Prostate gland (tissue), 2 donors: ENCODE measurements at regions of chr10 and their contacts with region 1.

Region 1: GRCh38 chr10:104580774-104581675 is 60.1 kb upstream of the SORCS3 start:
- DNase-seq: peak; percentile 65
- H3K4me3 ChIP-seq: no peak overlapping the region
- H3K27ac ChIP-seq: no peak overlapping the region
- H3K4me1 ChIP-seq: no peaks in the 10 kb centered on the region
- H3K27me3 ChIP-seq: no peaks in the 10 kb centered on the region
- CTCF ChIP-seq: peak; percentile 53 to 78 (median 62)
- POLR2A ChIP-seq: no peak

Region 2: GRCh38 chr10:104417637-104418296 is 163.3 kb before region 1 on chr10:
- intact Hi-C with region 1: loop called (anchors 10 kb)
- DNase-seq: no peak
- H3K4me3 ChIP-seq: no peak overlapping the region
- H3K27ac ChIP-seq: no peak overlapping the region
- H3K4me1 ChIP-seq: no peaks in the 10 kb centered on the region
- H3K27me3 ChIP-seq: peaks cover 4% of the 10 kb centered on the region
- CTCF ChIP-seq: no peak
- POLR2A ChIP-seq: no peak

Region 3: DNA sequence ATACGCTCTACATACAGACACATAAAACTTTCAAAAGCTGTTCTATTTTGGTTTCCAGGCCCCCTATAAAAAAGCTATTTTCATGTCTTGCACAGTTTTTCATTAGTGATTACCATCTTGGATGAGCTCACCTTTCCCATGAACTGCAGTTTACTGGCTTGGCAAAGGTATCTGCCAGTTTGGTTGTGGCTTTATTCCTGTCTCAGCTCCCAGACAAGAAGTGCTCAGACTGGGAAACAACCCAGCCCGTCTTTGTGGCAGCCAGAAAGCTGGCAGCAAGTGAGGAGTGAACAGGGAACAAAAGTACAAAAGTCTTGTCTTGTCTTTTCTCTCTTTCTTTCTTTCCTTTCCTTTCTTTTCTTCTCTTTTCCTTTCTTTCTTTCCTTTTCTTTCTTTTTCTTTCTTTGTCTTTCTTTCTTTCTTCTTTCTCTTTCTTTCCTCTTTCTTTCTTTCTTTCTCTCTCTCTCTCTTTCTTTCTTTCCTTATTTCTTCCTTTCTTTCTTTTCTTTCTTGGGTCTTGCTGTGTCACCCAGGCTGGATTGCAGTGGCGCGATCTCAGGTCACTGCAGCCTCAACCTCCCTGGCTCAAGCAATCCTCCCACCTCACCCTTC is 88.6 kb before region 1 on chr10:
- intact Hi-C with region 1: loop called (anchors 5 kb)
- DNase-seq: peak; percentile 90
- H3K4me3 ChIP-seq: no peak overlapping the region
- H3K27ac ChIP-seq: no peak overlapping the region
- H3K4me1 ChIP-seq: no peaks in the 10 kb centered on the region
- H3K27me3 ChIP-seq: no peaks in the 10 kb centered on the region
- CTCF ChIP-seq: no peak
- POLR2A ChIP-seq: no peak

Region 4: DNA sequence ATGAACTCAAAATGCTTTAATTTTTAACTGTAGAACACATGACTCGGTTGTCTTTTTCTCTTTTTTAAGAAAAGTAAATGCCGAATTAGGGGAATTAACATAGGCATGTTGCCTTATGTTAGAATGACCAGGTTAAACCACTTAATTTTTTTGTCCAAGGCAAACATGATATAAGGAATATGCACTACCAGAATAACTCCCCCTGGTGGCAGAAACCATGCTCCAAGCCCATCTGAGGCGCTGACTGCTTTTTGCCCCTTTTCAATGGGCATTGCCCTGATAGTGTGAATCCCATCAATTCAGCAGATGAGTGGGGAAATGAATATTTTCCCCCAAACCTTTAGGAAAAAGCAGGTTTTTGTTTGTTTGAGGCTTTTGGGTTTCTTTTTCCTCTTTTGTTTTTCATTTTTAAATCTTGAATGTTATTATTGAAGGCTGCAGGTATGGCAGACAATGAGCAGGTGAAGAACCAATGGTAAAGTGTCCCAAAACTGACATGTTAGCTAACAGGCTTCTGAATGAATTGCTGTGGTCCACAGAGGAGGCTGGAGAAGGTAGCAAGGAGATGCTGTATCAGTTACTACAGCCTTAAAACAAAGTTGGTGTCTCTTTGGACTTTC is 344.3 kb after region 1 on chr10:
- intact Hi-C with region 1: loop called (anchors 5 kb)
- DNase-seq: peak; percentile 9
- H3K4me3 ChIP-seq: no peak overlapping the region
- H3K27ac ChIP-seq: no peak overlapping the region
- H3K4me1 ChIP-seq: no peaks in the 10 kb centered on the region
- H3K27me3 ChIP-seq: no peaks in the 10 kb centered on the region
- CTCF ChIP-seq: peak in 3 of 4 experiments; percentile 34 to 56 (median 38)
- POLR2A ChIP-seq: no peak